Activated CD4-positive, alpha-beta memory T cell treated with anti-CD3 and anti-CD28 coated beads, Interleukin-2, amount 10 ng/mL, durations not matched to agents 7 days and 5 days (primary cell): ENCODE measurements at regions of chr4 and their contacts with region 1.

Region 1: DNA sequence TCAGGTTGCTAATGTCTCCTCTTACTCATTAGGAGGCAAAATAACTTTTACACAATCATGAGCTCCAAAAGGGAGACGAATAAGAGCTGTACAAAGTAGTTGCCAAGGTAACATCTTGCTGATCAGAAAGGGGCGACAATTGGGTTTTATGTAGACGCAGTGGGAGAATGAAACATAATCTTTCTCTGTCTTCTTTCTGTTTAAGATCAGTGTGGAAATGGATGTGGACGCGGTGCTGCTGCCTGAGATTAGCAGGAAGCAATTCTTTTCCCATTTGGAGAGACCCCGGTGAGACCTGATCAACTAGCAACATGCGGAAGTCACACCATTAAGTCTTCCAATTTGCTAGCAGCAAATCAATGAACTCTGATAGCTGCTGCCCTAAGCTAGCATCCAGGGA is 90.7 kb upstream of the IGFBP7 start:
- DNase-seq: no peak
- H3K4me3 Mint-ChIP-seq: no peak overlapping the region
- H3K27ac Mint-ChIP-seq: no peak overlapping the region
- H3K4me1 Mint-ChIP-seq: no peaks in the 10 kb centered on the region
- H3K27me3 Mint-ChIP-seq: peaks cover 4% of the 10 kb centered on the region

Region 2: GRCh38 chr4:57190601-57191481 is 10.1 kb before region 1 on chr4:
- CTCF ChIA-PET with region 1: interaction called, 13 read pairs
- POLR2A ChIA-PET with region 1: no interaction called
- DNase-seq: peak; percentile 16
- H3K4me3 Mint-ChIP-seq: no peak overlapping the region
- H3K27ac Mint-ChIP-seq: no peak overlapping the region
- H3K4me1 Mint-ChIP-seq: no peaks in the 10 kb centered on the region
- H3K27me3 Mint-ChIP-seq: peaks cover 3% of the 10 kb centered on the region

Region 3: GRCh38 chr4:57214654-57215411 is 13.9 kb after region 1 on chr4:
- CTCF ChIA-PET with region 1: no interaction called
- POLR2A ChIA-PET with region 1: no interaction called
- DNase-seq: no peak
- H3K4me3 Mint-ChIP-seq: no peak overlapping the region
- H3K27ac Mint-ChIP-seq: no peak overlapping the region
- H3K4me1 Mint-ChIP-seq: no peaks in the 10 kb centered on the region
- H3K27me3 Mint-ChIP-seq: no peaks in the 10 kb centered on the region